Gastrocnemius medialis (tissue), 4 donors: ENCODE measurements at regions of chr14 and their contacts with region 1.

Region 1: DNA sequence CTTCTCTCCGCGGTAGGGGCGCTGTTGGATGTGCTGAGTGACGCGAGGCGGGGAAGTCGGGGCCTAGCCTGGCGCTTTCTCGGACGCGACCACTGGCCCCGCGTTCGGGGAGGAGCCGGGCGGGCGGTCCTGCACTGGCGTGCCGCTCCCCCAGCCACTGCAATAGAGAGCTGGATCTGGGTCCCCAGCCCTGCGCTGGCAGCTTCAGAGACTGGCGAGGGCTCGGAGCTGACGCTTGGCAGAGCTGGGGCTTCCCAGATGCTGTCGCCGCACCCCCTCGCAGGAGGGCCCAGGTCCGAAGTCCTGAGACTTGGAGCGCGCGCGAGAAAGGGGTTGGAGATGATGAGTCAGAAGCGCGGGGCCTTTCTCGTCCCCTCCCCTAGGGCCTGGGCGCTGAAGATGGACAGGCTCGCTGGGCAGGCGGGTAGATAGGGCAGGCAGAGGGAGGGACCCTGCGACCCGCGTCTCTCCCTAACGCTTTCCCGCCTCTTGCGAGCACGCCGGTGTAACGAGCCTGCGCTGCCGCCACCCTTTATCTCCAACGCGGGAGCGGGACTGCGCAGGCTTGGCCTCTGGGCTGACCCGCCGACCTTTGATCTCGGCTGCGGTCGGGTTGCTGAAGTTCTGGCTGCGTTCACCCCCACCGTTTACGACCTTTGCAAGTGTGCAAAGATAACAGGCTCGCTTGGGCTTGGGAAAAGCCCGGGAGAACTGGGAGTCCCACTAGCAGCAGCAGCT is 3.0 kb downstream of the TMEM253 start:
- DNase-seq: peak; percentile 95
- ATAC-seq: peak; percentile 87 to 92
- H3K4me3 ChIP-seq: peak overlapping the region; percentile 74 to 86 (median 82)
- H3K27ac ChIP-seq: peak overlapping the region; percentile 97 to 99 (median 98)
- H3K4me1 ChIP-seq: peaks cover 40 to 41% of the 10 kb centered on the region in 2 donors
- H3K27me3 ChIP-seq: no peaks in the 10 kb centered on the region
- CTCF ChIP-seq: peak; percentile 77 to 87 (median 84)
- POLR2A ChIP-seq: peak; percentile 88 to 92

Region 2: DNA sequence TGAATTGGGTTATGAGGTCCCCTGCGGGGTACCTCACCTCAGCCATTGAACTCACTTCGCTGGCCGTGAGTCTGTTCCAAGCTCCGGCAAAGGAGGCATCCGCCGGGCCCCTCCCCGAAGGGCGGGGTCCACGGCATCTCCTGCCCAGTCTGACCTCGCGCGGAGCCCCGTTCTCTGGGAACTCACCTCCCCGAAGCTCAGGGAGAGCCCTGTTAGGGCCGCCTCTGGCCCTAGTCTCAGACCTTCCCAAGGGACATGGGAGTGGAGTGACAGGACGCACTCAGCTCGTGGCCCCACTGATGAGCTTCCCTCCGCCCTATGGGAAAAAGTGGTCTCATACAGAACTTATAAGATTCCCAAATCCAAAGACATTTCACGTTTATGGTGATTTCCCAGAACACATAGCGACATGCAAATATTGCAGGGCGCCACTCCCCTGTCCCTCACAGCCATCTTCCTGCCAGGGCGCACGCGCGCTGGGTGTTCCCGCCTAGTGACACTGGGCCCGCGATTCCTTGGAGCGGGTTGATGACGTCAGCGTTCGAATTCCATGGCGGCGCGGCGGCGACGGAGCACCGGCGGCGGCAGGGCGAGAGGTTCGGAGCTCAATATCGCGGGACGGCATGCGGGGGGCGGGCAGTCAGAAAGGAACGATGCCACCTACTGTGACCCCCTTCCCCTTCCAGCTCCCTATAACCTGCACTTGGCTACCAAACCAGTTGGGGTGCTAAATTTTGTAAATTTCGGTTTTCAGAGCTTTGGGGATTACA is 760.6 kb before region 1 on chr14 and contains the start of gene PARP2:
- in situ Hi-C with region 1: no loop called
- intact Hi-C with region 1: loop called (anchors 10 kb)
- DNase-seq: peak; percentile 97 to 98
- ATAC-seq: peak; percentile 96 to 97
- H3K4me3 ChIP-seq: peak within 1 kb of the TSS; percentile 74 to 83 (median 78)
- H3K27ac ChIP-seq: peak within 1 kb of the TSS; percentile 88 to 94 (median 92)
- H3K4me1 ChIP-seq: peaks cover 5 to 10% of the 10 kb centered on the region in 2 donors
- H3K27me3 ChIP-seq: no peaks in the 10 kb centered on the region
- CTCF ChIP-seq: no peak
- POLR2A ChIP-seq: peak; percentile 90 to 97
- total RNA-seq, gene PARP2: 5.1 to 15.0 (median 7.0) TPM

Region 3: DNA sequence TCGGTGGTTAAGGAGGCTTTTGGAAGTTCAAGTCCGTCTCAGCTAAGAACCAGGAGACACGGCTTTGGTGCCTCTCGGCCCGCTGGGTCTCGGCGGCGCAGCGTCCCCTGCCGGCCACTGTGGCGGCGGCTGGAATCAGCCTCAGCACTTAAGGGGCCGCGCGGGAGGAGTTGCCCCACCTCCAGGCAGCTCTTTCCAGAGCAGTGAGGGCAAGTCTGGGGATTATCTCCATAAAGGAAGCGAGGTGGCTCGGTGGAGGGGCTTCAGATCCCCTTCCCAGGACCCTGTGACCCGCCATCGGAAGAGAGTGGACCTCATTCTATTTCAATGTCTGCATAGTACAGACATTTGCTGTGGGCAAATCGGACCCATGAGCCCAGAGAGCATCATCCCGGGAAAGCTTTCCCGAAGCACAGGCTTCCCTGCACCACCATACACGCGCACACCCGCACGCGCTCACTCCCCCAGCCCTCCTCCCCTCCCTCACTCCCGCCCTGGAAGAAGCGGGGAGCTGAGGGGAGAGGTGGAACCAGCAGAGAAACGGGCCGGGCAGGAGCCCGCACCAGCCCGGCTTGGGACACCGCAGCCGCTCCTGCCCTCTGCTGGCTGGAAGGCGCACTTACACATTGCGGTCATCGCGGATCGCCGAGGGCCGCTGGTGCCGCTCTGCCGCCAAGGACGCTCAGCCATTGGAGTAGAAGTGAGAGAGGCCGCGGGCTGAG is 132.7 kb before region 1 on chr14:
- in situ Hi-C with region 1: no loop called
- intact Hi-C with region 1: loop called (anchors 5 kb)
- DNase-seq: peak; percentile 62 to 74
- ATAC-seq: peak; percentile 92 to 93
- H3K4me3 ChIP-seq: peak overlapping the region; percentile 68 to 80 (median 71)
- H3K27ac ChIP-seq: peak overlapping the region; percentile 40 to 67 (median 59)
- H3K4me1 ChIP-seq: peaks cover 5 to 7% of the 10 kb centered on the region in 2 donors
- H3K27me3 ChIP-seq: no peaks in the 10 kb centered on the region
- CTCF ChIP-seq: peak; percentile 77 to 88 (median 84)
- POLR2A ChIP-seq: no peak

Region 4: DNA sequence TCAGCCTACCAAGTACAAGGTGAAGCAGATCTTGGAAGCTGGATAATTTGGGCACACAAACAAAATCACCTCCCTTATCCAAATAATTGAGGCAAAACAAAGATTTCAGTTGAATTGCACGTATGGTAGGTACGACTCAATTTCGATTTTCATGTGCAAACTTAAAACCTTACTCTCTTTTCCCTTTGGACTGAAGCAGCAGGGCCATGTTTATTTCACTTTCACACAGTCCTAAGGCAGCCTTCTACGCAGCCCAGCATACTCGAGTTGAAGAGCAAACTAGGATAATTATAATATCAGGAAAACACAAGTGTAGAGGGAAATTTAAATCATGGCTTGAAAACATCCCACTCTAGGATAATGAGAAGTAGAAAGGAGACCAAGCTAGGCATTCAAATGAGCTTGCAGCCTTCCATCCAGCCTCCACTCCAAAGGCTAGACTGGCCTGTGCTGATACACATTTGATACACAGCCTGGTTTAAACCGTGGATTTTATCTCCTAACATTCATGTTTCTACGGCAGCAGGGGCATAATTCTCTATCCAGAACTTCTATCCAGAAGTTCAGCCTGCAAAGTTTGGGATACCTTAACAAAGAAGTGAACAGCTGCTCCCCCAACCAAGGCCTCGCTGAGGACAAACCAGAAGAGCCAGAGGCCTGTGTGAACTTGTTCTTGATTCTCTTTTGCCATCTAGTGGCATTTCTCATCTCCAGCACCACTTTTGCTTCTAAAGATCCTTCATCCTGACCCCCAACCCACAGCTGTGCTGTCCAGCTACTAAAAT is 64.1 kb before region 1 on chr14:
- in situ Hi-C with region 1: no loop called
- intact Hi-C with region 1: loop called (anchors 1 kb)
- DNase-seq: peak in 1 of 2 donors; percentile 72
- ATAC-seq: peak; percentile 53 to 68
- H3K4me3 ChIP-seq: peak overlapping the region in 2 of 4 donors; percentile 19 to 26
- H3K27ac ChIP-seq: peak overlapping the region; percentile 83 to 91 (median 86)
- H3K4me1 ChIP-seq: peaks cover 62 to 75% of the 10 kb centered on the region in 2 donors
- H3K27me3 ChIP-seq: no peaks in the 10 kb centered on the region
- CTCF ChIP-seq: peak; percentile 77 to 84 (median 79)
- POLR2A ChIP-seq: peak in 1 of 2 donors; percentile 1

Region 5: DNA sequence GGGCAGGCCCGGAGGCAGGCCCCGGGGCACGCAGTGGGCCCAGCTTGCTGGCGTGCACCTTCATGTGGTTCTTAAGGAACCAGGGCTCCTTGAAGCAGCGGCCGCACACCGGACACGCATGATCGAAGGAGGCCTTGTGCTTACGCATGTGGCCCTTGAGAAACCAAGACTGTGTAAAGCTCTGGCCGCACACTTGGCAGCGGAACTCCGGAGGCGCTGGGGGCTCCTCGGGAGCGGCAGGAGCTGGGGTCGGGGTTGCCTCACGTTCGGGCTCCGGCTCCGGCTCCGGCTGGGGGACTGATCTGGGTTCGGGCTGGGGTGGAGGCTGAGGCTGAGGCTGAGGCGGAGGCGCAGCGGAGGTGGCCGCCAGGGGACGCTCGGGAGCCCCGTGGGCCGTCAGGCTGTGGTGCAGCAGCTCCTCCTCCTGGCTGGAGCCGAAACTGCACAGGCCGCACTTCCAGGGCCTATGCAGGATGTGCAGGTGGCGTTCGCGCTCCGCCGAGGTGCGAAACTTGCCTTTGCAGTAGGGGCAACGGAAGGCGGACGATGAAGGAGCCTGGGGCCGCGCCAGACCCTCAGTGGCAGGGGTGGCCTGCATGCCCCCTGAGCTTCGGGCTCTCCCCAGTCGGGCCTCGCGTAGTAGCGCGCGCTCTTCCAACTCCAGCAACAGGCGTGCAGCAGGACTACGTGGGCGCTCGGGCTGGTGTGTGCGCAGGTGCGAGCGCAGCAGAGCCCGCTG is 11.4 kb before region 1 on chr14:
- in situ Hi-C with region 1: no loop called
- intact Hi-C with region 1: loop called (anchors 1 kb)
- DNase-seq: peak; percentile 64 to 74
- ATAC-seq: peak; percentile 70 to 84
- H3K4me3 ChIP-seq: no peak overlapping the region
- H3K27ac ChIP-seq: peak overlapping the region in 2 of 4 donors; percentile 33 to 63
- H3K4me1 ChIP-seq: peaks cover 3 to 14% of the 10 kb centered on the region in 2 donors
- H3K27me3 ChIP-seq: no peaks in the 10 kb centered on the region
- CTCF ChIP-seq: peak; percentile 100
- POLR2A ChIP-seq: no peak